ENCODE measurements at regions of chr3 and their contacts with region 1.

Region 1: GRCh38 chr3:172635588-172635987 is 75.3 kb downstream of the NCEH1 start:
- DNase-seq: peak; percentile 76
- H3K4me3 ChIP-seq: no peak overlapping the region
- H3K27ac ChIP-seq: peak overlapping the region; percentile 31
- H3K4me1 ChIP-seq: peaks cover 5% of the 10 kb centered on the region
- H3K27me3 ChIP-seq: no peaks in the 10 kb centered on the region
- CTCF ChIP-seq: no peak

Region 2: GRCh38 chr3:172289582-172289981 is 346.0 kb before region 1 on chr3:
- CTCF ChIA-PET with region 1: no interaction called
- dilution Hi-C with region 1: no loop called
- in situ Hi-C with region 1: no loop called
- intact Hi-C with region 1: no loop called
- DNase-seq: no peak
- H3K4me3 ChIP-seq: no peak overlapping the region
- H3K27ac ChIP-seq: no peak overlapping the region
- H3K4me1 ChIP-seq: peaks cover 31% of the 10 kb centered on the region
- H3K27me3 ChIP-seq: no peaks in the 10 kb centered on the region
- CTCF ChIP-seq: peak in 1 of 2 donors; percentile 33

Region 3: DNA sequence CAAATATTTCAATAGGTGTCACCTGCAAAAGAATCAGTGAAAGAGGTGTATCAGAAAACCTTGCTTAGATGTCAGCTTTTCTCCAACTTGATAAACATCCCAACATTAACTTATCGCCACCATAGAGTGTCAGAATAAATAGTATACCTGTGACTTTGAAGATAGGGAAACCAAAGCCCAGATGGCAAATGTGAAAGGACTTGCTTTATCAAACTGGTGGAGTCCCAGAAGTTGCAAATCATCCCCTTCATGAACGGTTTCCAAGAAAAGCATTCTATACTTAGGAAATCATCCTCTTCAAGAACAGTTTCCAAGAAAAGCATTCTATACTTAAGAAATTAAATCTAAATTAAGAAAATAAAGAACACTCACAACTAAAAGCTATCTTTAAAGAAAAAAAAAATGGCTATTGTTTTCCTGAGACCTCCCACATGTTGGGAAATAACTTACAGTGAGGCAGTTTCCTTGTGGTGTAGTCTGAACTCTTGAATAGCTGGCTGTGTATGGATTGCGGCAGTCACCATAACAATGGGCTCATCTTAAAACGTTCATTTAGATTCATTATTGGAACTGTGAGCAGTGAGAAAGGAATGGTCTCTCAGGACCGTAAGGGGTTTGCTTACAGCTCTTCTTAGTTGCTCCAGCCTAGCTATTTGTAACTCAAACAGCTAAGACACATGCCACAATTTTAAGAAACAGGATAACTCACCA is 243.8 kb before region 1 on chr3:
- CTCF ChIA-PET with region 1: no interaction called
- dilution Hi-C with region 1: no loop called
- in situ Hi-C with region 1: loop called in 1 of 2 experiments (anchors 25 kb)
- intact Hi-C with region 1: no loop called
- DNase-seq: peak; percentile 27
- H3K4me3 ChIP-seq: no peak overlapping the region
- H3K27ac ChIP-seq: no peak overlapping the region
- H3K4me1 ChIP-seq: no peaks in the 10 kb centered on the region
- H3K27me3 ChIP-seq: no peaks in the 10 kb centered on the region
- CTCF ChIP-seq: no peak

Region 4: GRCh38 chr3:172595641-172596393 is 39.8 kb before region 1 on chr3:
- CTCF ChIA-PET with region 1: no interaction called
- dilution Hi-C with region 1: no loop called
- in situ Hi-C with region 1: no loop called
- intact Hi-C with region 1: no loop called
- DNase-seq: peak; percentile 65
- H3K4me3 ChIP-seq: peak overlapping the region; percentile 11 to 23 (median 11)
- H3K27ac ChIP-seq: peak overlapping the region; percentile 28
- H3K4me1 ChIP-seq: peaks cover 8% of the 10 kb centered on the region
- H3K27me3 ChIP-seq: no peaks in the 10 kb centered on the region
- CTCF ChIP-seq: peak; percentile 86 to 90

Region 5: DNA sequence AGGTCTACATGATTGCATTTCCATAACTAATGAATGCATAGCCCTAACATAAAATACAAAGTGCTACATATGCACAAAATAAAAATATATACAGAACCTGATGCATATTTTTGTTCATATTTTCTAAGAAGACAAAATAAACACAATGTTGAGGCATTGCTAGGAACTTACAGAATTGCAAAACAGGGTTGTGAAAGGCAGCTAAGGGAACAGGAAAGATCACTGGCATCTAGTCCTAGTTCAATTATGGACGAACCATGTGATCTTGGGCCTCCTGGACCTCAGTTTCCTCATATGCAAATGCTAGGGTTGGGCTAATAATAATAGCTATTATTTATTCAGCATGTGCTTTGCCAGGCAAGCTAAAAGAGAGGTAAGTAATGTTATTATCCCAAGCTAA is 90.8 kb after region 1 on chr3:
- CTCF ChIA-PET with region 1: no interaction called
- dilution Hi-C with region 1: no loop called
- in situ Hi-C with region 1: no loop called
- intact Hi-C with region 1: no loop called
- DNase-seq: no peak
- H3K4me3 ChIP-seq: no peak overlapping the region
- H3K27ac ChIP-seq: no peak overlapping the region
- H3K4me1 ChIP-seq: peaks cover 4% of the 10 kb centered on the region
- H3K27me3 ChIP-seq: no peaks in the 10 kb centered on the region
- CTCF ChIP-seq: no peak

Measured in mammary epithelial cell (primary cell).